ENCODE measurements at regions of chr9 and their contacts with region 1.

Region 1: DNA sequence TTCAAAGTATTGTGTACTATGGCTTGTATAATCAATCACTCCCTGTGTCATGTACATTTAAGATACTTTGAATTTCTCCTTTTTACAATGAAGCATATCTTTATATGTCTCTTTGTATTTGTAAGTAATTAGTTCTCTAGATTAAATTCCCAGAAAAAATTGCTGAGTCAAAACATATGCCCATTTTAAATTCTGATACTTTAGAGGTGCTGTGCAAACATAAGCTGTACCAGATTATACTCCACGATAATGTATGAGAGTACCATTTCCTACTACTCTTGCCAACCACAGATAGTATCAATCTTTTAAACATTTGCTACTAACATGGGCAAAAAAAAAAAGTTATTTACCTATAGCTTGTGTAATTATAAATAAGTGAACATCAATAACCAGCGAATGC is 18.3 kb downstream of the DCAF10 start:
- DNase-seq: no peak
- ATAC-seq: no peak
- H3K4me3 ChIP-seq: no peak overlapping the region
- H3K27ac ChIP-seq: no peak overlapping the region
- H3K4me1 ChIP-seq: no peaks in the 10 kb centered on the region
- H3K27me3 ChIP-seq: no peaks in the 10 kb centered on the region
- CTCF ChIP-seq: no peak
- POLR2A ChIP-seq: no peak
- RAD21 ChIP-seq: no peak

Region 2: DNA sequence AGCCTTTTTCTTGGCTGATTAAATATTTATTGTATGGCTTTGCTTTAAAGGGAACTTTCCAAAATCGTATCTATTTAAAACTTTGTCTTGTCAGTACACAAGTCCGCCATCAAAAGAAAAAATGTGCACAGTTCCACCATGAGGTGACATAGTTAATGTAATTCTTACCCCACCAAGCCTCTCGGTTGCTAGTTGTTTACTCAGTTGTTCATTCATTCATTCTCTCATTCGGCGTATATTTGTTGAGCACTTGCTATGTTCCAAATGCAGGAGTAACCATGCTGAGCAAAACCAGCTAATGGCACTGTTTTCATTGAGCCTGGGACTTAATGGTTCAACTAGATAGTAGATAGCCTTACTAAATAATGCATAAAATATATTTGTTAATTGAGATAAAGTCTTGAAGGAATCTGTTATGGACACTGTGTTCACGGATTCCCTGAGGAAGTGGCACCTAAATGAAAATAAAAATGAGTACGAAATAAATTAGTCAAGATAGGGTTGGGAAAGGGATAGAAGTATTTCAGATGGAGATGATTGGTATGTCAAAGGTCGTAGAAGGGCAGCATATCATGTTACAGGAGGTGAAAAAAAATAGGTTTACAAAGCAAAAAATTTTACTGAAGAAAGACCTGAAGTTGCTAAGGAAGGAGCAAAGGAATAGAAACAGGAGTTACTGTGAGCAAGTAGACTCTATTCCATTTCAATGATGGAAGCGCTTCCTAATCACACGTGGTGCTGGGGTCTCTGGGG is 16.7 kb before region 1 on chr9:
- CTCF ChIA-PET with region 1: interaction called, 6 read pairs
- POLR2A ChIA-PET with region 1: no interaction called
- dilution Hi-C with region 1: no loop called
- in situ Hi-C with region 1: no loop called
- intact Hi-C with region 1: loop called (anchors 2 kb)
- DNase-seq: no peak
- ATAC-seq: no peak
- H3K4me3 ChIP-seq: peak overlapping the region; percentile 99
- H3K27ac ChIP-seq: peak overlapping the region; percentile 88
- H3K4me1 ChIP-seq: peaks cover 4% of the 10 kb centered on the region
- H3K27me3 ChIP-seq: no peaks in the 10 kb centered on the region
- CTCF ChIP-seq: no peak
- POLR2A ChIP-seq: no peak
- RAD21 ChIP-seq: no peak

Region 3: GRCh38 chr9:37880916-37881479 is 62.1 kb after region 1 on chr9:
- CTCF ChIA-PET with region 1: no interaction called
- POLR2A ChIA-PET with region 1: no interaction called
- dilution Hi-C with region 1: no loop called
- in situ Hi-C with region 1: no loop called
- intact Hi-C with region 1: no loop called
- DNase-seq: peak; percentile 10
- ATAC-seq: peak; percentile 68
- H3K4me3 ChIP-seq: no peak overlapping the region
- H3K27ac ChIP-seq: peak overlapping the region; percentile 9; the same call in 1 of the 2 replicates
- H3K4me1 ChIP-seq: no peaks in the 10 kb centered on the region
- H3K27me3 ChIP-seq: no peaks in the 10 kb centered on the region
- CTCF ChIP-seq: no peak
- POLR2A ChIP-seq: no peak
- RAD21 ChIP-seq: no peak

Measured in IMR-90 (cell line).